ENCODE measurements at regions of chr1 and their contacts with region 1.

Region 1: DNA sequence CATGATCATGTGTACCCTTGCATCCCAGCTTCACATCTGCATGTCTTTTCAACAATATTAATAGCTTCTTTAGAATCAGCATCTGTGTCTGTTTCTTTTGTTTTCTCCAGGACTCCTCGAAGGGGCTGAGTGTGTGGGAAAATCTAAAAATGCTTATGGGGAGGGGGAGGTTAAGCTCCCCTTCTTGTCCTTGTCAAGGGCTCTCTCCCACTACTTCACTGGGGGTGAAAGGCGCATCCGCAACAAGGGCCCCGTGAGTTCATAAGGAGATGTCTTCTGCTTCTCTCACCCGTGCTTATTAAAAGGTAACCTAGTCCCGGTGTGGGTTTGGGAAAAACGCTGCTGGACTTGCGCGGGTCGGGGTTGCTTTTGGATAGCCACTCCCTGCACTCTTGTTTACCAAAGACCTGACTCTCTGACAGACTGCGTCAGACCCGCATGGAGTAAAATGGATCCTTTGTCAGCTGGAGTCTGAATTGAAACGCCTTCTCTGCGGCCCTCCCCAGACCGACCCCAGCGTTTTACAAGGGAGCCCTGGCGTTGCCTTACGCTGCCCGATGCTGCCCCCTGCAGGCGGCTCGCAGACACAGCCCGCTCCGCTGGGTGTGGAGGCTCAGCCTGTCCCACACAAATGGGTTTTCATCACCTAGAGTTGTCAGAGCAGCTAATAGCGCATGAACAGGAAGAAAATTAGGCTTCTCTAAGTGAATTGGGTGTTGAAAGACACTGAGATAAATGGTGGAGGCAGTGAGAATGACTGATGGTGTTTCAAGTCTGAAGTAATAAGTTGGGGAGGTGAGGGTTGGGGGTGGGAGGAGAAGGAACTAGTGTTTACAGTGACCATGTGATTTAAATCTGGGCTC is 53.8 kb downstream of the IER5 start:
- DNase-seq: peak; percentile 94
- ATAC-seq: peak; percentile 96
- H3K4me3 Mint-ChIP-seq: peak overlapping the region; percentile 59
- H3K27ac Mint-ChIP-seq: no peak overlapping the region
- H3K4me1 Mint-ChIP-seq: peaks cover 10% of the 10 kb centered on the region
- H3K27me3 Mint-ChIP-seq: peaks cover 13% of the 10 kb centered on the region
- CTCF ChIP-seq: peak; percentile 96

Region 2: DNA sequence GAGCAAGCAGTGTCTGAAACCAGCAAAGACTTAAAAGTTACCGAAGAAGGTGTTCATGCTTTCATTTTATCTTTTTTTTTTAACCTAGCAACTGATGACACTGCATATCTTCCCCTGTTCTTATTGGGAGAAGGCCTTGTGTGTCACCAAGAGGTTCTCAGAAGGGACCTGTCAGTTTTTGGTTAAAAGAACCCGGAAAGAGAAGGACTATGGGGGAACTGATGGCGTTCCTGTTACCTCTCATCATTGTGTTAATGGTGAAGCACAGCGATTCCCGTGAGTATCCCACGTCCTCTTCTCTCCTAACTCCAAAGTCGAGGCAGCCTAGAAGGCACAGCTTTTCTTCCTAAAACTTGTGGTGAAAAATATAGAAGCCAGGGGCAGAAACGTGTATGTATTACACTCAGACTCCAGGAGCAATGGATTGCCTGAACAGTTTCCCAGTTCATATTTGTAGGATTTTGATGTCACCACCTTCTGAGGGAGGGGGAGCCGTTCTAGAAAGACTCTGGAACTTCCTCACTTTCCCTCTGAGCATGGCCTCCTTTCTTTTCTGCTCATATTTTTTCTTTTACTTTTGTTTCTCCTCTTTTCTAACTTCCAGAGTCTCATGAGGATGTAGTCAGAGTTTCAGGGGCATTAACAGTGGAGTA is 108.4 kb before region 1 on chr1 and contains the start of gene MR1:
- CTCF ChIA-PET with region 1: interaction called, 51 read pairs
- POLR2A ChIA-PET with region 1: interaction called, 3 read pairs
- DNase-seq: no peak
- ATAC-seq: peak; percentile 52
- H3K4me3 Mint-ChIP-seq: no peak within 1 kb of the TSS
- H3K27ac Mint-ChIP-seq: no peak within 1 kb of the TSS
- H3K4me1 Mint-ChIP-seq: no peaks in the 10 kb centered on the region
- H3K27me3 Mint-ChIP-seq: no peaks in the 10 kb centered on the region; the same call in 1 of the 2 replicates
- CTCF ChIP-seq: no peak
- total RNA-seq, gene MR1: 0.28 to 0.64 TPM (median 0.30 TPM) in 3 replicates

Region 3: DNA sequence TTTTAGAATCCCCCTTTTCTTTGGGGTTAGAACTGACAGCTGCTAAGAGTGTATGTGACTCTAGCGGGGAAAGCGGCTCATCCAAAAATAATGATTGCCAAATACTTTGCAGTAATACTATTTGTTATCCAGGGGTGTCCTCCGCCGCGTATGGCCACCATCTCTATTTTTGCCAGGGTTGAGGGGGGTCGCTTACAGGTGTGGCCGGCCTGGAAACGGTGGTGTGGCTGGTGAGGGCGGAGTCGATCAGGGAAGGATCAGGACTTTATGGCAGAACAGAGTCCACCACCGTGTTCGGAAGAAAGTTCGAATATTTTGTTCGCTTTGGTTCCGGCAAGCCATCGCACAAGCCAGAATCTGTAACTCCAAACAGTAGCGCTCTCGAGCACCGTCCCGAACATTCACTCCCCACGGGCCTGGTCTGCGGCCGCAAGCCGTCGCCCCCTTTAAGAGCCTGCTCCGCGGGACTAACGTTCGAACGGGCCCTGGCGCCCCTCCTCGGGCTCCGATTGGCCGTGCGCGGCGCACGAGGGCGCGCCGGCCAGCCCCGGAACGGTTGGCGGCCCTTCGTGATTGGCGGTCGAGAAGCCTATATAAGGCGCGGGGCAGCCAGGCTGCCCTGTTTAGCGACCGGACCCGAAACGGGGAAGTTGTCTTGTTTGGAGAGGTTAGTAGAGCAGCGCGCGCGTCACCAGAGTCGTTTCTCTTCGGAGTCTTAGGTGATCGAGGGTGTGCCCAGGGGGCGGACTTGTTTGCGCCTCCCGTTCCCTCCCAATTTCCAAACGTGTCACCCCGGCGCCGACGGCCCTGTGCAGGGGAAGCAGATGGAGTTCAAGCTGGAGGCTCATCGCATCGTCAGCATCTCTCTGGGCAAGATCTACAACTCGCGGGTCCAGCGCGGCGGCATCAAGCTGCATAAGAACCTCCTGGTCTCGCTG is 54.0 kb before region 1 on chr1 and contains the start of gene IER5:
- CTCF ChIA-PET with region 1: interaction called, 43 read pairs
- POLR2A ChIA-PET with region 1: interaction called, 4 read pairs
- DNase-seq: peak; percentile 91
- ATAC-seq: peak; percentile 87
- H3K4me3 Mint-ChIP-seq: peak within 1 kb of the TSS; percentile 94
- H3K27ac Mint-ChIP-seq: peak within 1 kb of the TSS; percentile 92
- H3K4me1 Mint-ChIP-seq: peaks cover 37% of the 10 kb centered on the region
- H3K27me3 Mint-ChIP-seq: peaks cover 35% of the 10 kb centered on the region
- CTCF ChIP-seq: no peak
- total RNA-seq, gene IER5: 14.2 to 18.2 TPM (median 14.3 TPM) in 3 replicates

Region 4: DNA sequence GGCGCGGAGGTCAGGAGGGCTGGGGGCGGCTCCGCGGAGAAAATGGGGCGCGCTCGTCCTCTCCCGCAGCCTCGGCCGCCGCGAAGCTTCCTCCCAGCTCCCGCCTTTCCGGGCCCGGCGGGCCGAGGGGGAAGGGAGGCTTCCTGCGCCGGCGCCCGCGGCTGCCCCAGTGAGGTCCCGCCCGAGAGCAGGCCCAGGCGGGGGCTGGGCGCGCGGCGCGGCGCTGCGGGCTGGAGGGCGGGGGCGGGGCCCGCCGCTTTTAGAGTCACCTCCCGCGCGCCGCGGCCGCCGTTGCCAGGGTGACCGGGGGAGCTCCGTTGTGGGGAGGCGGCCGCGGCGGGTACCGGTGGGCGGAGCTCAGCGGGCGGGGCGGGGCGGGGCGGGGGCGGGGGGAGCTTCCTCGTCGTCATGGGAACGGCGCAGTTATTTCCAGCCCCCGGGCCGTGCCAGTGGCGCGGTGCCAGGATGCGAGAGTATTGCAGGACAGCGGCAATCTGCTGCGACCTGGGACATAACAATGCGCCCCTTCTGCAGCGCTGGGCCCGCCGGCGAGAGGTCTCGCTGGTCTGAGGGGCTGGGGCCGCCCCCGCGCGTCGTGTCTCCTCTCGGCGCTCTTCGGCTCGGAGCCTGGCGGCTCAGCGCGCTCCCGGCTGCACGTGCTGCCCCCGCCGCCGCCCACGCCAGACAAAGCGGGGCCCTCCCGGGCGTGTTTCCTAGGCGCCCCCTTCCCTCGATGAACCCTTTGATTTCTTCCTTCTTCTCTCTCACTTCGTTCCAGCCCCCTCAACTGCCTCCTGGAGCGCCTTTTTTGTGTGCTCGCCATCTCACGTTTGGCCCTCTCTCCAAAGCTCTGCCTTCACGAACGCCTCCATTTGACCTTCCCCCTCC is 36.9 kb before region 1 on chr1:
- CTCF ChIA-PET with region 1: interaction called, 20 read pairs
- POLR2A ChIA-PET with region 1: interaction called, 4 read pairs
- DNase-seq: peak; percentile 89
- ATAC-seq: peak; percentile 63
- H3K4me3 Mint-ChIP-seq: peak overlapping the region; percentile 85
- H3K27ac Mint-ChIP-seq: no peak overlapping the region
- H3K4me1 Mint-ChIP-seq: peaks cover 83% of the 10 kb centered on the region
- H3K27me3 Mint-ChIP-seq: peaks cover 73% of the 10 kb centered on the region
- CTCF ChIP-seq: no peak

Region 5: GRCh38 chr1:181152892-181153633 is 10.7 kb after region 1 on chr1:
- CTCF ChIA-PET with region 1: interaction called, 24 read pairs
- POLR2A ChIA-PET with region 1: no interaction called
- DNase-seq: peak; percentile 34
- ATAC-seq: peak; percentile 88
- H3K4me3 Mint-ChIP-seq: no peak overlapping the region
- H3K27ac Mint-ChIP-seq: 0 out of 2 replicates have a peak overlapping the region, but pooled peaks have one; percentile 44
- H3K4me1 Mint-ChIP-seq: peaks cover 20% of the 10 kb centered on the region
- H3K27me3 Mint-ChIP-seq: no peaks in the 10 kb centered on the region; the same call in 1 of the 2 replicates
- CTCF ChIP-seq: no peak

Region 6: DNA sequence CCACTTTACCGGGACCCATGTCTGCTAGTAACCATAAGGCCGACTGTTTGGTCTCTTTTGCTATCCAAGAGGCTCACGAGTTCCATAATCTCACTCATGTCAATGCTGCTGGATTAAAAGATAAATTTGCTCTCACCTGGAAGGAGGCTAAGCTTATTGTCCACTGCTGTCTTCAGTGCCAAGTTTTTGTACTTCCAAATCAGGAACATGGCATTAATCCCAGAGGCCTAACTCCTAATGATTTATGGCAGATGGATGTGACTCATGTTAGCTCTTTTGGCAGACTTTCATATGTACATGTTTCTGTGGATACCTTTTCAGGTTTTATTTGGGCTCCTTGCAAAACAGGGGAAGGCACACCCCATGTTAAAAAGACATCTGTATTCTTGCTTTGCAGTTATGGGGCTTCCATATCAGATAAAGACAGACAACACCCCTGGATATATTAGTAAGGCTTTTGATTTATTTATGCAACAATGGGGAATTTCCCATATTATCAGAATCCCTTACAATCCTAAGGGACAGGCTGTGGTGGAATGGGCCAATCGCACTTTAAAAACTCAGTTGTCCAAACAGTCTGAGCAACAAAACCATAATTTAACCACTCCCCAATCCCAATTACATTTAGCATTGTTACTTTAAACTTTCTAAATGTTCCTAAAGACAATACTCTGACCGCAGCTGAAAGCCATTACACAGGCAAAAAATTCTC is 108.8 kb after region 1 on chr1:
- CTCF ChIA-PET with region 1: no interaction called
- POLR2A ChIA-PET with region 1: no interaction called
- DNase-seq: no peak
- ATAC-seq: no peak
- H3K4me3 Mint-ChIP-seq: no peak overlapping the region
- H3K27ac Mint-ChIP-seq: 0 out of 2 replicates have a peak overlapping the region, but pooled peaks have one; percentile 17
- H3K4me1 Mint-ChIP-seq: peaks cover 22% of the 10 kb centered on the region
- H3K27me3 Mint-ChIP-seq: peaks cover 4% of the 10 kb centered on the region
- CTCF ChIP-seq: no peak